ENCODE measurements at regions of chr1 and their contacts with region 1.

Region 1: GRCh38 chr1:212994926-212995325 is 20.7 kb downstream of the ANGEL2 start:
- DNase-seq: no peak
- ATAC-seq: no peak
- H3K4me3 Mint-ChIP-seq: no peak overlapping the region
- H3K27ac Mint-ChIP-seq: no peak overlapping the region
- H3K4me1 Mint-ChIP-seq: no peaks in the 10 kb centered on the region
- H3K27me3 Mint-ChIP-seq: no peaks in the 10 kb centered on the region
- CTCF ChIP-seq: no peak

Region 2: GRCh38 chr1:212070720-212071302 is 924.1 kb before region 1 on chr1:
- CTCF ChIA-PET with region 1: no interaction called
- POLR2A ChIA-PET with region 1: no interaction called
- intact Hi-C with region 1: loop called (anchors 5 kb)
- DNase-seq: no peak
- ATAC-seq: peak; percentile 47
- H3K4me3 Mint-ChIP-seq: no peak overlapping the region
- H3K27ac Mint-ChIP-seq: no peak overlapping the region
- H3K4me1 Mint-ChIP-seq: no peaks in the 10 kb centered on the region
- H3K27me3 Mint-ChIP-seq: no peaks in the 10 kb centered on the region
- CTCF ChIP-seq: no peak

Region 3: DNA sequence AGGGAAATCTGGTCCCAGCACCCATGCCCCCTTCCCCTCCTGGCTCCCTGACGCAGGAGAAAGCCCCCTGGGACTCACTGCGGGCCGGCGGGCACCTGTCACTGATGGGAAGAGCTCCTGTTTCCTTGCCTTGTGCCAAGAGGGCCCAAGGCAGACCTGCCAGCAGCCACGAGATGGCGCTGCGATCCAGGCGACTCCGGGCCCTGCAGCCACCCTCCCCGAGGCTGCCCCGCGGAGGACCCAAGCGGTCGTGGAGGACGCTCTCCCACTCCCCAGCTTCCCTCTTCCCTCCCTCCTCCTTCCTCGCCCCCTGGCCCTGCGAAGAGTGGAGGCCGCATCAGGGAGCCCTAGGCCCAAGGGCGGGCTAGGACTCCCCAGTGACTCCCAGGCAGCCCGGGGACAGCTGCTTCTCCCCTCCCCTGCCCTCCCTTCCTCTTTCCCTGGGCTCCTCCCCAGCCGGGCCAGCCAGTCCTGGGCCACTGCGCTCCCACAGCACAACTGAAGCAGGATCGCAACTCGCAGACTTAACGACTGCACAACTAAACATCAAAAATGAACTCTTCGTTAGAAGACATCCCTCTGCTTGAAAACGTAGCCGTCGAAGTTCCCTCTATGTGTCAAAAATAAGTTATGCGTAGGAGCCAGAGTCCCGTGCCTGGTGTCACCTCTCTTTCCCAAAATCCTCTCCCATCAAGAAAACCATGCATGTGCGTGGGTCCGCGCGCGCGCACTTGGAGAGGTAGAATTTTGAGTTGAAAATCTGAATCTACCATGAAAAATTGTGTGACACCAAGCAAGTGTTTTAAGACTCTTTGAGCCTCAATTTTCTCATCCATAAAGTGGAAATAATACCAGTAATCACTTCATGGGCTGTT is 329.4 kb before region 1 on chr1:
- CTCF ChIA-PET with region 1: interaction called, 40 read pairs
- POLR2A ChIA-PET with region 1: interaction called, 4 read pairs
- intact Hi-C with region 1: loop called (anchors 1 kb)
- DNase-seq: peak; percentile 80
- ATAC-seq: peak; percentile 94
- H3K4me3 Mint-ChIP-seq: peak overlapping the region; percentile 82
- H3K27ac Mint-ChIP-seq: peak overlapping the region; percentile 53
- H3K4me1 Mint-ChIP-seq: peaks cover 17% of the 10 kb centered on the region
- H3K27me3 Mint-ChIP-seq: no peaks in the 10 kb centered on the region
- CTCF ChIP-seq: peak; percentile 61

Region 4: DNA sequence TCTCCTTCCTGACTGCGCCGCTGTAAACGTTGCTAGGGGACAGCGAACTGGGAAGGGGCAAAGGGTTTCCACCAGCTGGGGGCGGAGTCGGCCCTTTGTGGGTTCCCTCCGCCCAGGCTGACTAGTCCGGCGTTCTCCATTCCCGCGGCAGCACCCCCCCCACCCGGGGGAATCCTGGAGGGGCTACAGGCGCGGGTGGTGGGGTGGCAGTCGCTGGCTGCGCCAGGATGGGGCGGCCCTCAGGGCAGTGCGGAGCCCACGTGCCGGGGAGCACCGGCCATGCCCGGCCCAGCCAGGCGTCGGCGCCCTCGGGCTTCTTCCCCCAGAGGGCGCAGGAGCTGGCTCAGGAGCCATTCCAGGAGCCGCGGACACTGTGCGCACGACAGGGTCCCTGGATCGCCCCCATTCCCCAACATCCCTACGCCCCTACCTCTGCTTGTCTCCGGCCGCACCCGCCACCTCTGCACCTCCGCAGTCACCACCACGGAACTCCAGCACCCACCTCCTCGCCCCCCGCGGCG is 295.8 kb before region 1 on chr1:
- CTCF ChIA-PET with region 1: interaction called, 4 read pairs
- POLR2A ChIA-PET with region 1: no interaction called
- intact Hi-C with region 1: loop called (anchors 1 kb)
- DNase-seq: peak; percentile 56
- ATAC-seq: peak; percentile 55
- H3K4me3 Mint-ChIP-seq: peak overlapping the region; percentile 88
- H3K27ac Mint-ChIP-seq: peak overlapping the region; percentile 79
- H3K4me1 Mint-ChIP-seq: peaks cover 45% of the 10 kb centered on the region
- H3K27me3 Mint-ChIP-seq: peaks cover 11% of the 10 kb centered on the region
- CTCF ChIP-seq: no peak

Region 5: DNA sequence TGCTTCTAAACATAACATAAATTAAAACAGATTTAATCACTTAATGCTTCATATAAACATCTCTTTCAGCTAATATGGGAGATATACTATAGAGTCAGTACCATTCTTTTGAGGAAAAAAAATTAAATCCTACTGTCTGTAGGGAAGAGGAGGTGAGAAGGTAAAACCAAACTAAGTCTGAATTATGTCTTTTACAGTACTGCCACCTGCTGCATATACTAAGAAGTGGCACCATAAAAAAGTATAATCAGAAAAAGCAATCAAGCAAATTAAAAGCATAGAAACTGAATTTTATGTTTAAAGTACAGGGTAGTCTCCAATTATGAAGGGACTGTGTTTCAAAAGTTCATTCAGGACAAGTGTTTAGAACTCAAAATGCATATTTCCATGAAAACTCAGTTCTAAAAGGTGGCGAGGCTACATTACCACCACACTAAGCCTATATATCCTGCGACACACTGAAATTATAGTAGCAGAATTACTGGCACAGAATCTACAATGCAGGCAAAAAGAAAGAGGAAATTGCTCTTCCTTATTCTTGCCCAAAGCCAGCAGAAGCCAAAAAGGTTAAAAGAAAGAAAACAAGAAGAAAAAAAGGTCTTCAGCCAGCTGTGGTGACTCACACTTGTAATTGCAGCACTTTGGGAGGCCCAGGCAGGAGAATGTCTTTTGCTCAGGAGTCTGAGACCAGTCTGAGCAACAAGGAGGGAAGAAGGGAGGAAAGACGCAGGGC is 212.3 kb before region 1 on chr1:
- CTCF ChIA-PET with region 1: interaction called, 6 read pairs
- POLR2A ChIA-PET with region 1: no interaction called
- intact Hi-C with region 1: loop called (anchors 1 kb)
- DNase-seq: no peak
- ATAC-seq: peak; percentile 66
- H3K4me3 Mint-ChIP-seq: no peak overlapping the region
- H3K27ac Mint-ChIP-seq: no peak overlapping the region
- H3K4me1 Mint-ChIP-seq: peaks cover 2% of the 10 kb centered on the region
- H3K27me3 Mint-ChIP-seq: no peaks in the 10 kb centered on the region
- CTCF ChIP-seq: peak; percentile 80

Region 6: GRCh38 chr1:212814537-212815334 is 180.2 kb before region 1 on chr1:
- CTCF ChIA-PET with region 1: interaction called, 31 read pairs
- POLR2A ChIA-PET with region 1: no interaction called
- intact Hi-C with region 1: loop called (anchors 1 kb)
- DNase-seq: no peak
- ATAC-seq: no peak
- H3K4me3 Mint-ChIP-seq: no peak overlapping the region
- H3K27ac Mint-ChIP-seq: no peak overlapping the region
- H3K4me1 Mint-ChIP-seq: peaks cover 6% of the 10 kb centered on the region
- H3K27me3 Mint-ChIP-seq: no peaks in the 10 kb centered on the region
- CTCF ChIP-seq: no peak

Region 7: DNA sequence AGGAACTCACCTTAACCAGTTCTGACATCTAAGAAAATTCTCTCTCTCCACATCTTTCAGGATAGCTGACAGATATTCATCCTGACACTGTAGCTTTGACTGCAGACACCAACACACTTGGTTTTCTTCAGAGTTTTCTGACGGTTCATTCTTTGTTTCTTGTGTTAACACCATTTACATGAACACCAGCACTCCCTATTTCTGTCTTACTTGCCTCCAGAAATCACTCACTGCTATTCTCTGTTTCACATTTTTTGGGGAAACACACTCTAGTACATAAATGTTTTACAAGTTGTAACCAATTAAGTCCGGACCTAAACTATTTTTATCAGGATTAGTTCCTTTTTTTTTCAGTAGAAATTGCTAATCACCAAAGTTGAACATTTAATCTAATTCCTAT is 121.4 kb before region 1 on chr1:
- CTCF ChIA-PET with region 1: no interaction called
- POLR2A ChIA-PET with region 1: no interaction called
- intact Hi-C with region 1: no loop called
- DNase-seq: no peak
- ATAC-seq: no peak
- H3K4me3 Mint-ChIP-seq: no peak overlapping the region
- H3K27ac Mint-ChIP-seq: no peak overlapping the region
- H3K4me1 Mint-ChIP-seq: peaks cover 4% of the 10 kb centered on the region
- H3K27me3 Mint-ChIP-seq: no peaks in the 10 kb centered on the region
- CTCF ChIP-seq: no peak

Region 8: DNA sequence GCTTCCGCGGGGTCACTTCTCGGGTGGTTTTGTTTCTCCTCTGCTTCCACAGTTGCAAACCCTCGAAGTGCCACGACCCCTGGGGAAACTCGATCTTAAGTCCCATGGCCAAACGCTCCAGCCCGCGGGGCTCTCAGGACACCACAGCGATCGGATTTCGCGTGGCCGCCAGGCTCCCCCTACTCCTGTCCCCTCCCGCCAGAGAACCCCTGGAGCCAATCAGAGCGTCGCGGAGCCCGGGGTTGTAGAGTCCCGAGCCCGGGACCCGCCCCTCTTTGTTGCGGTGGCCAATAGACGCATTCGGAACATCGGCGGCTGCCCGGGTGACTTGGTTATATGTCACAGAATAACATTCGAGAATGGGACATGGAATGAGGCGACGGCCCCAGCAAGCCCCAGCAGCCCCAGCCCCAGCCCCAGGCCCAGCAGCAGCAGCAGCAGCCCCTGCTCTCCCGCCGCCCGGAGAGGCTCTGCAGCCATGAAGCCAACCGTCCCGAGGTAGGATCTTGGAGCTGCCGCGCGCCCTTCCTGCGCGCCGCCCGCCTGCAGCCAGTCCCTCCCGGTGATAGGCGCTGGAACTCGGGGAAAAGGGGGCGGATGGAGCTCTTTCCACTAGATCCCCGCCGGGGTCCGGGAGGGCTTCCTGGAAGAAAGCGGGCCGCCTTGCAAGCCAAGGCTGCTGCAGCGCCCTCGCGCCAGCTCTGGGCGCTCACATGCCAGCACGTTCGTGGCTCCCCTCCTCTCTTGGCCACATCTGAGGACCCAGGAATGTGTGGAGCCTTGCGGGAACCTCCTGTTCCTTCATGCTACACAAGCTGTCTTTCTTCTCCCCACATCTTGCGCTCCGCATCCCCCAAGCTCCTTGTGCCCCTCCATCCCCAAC is 44.4 kb before region 1 on chr1 and contains the start of gene VASH2:
- CTCF ChIA-PET with region 1: interaction called, 3 read pairs
- POLR2A ChIA-PET with region 1: no interaction called
- intact Hi-C with region 1: loop called (anchors 5 kb)
- DNase-seq: peak; percentile 53
- ATAC-seq: peak; percentile 99
- H3K4me3 Mint-ChIP-seq: peak within 1 kb of the TSS; percentile 88
- H3K27ac Mint-ChIP-seq: no peak within 1 kb of the TSS
- H3K4me1 Mint-ChIP-seq: peaks cover 27% of the 10 kb centered on the region
- H3K27me3 Mint-ChIP-seq: peaks cover 21% of the 10 kb centered on the region
- CTCF ChIP-seq: no peak
- total RNA-seq, gene VASH2: 0.07 and 0.17 TPM in 2 replicates

Region 9: DNA sequence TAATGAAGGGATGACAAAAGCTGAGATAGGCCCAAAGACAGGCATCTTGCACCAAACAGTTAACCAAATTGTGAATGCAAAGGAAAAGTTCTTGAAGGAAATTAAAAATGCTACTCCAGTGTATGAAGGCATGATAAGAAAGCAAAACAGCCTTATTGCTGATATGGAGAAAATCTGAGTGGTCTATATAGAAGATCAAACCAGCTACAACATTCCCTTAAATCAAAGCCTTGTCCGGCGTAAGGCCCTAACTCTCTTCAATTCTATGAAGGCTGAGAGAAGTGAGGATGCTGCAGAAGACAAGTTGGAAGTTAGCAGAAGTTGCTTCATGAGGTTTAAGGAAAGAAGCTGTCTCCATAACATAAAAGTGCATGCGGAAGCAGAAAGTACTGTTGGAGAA is 25.1 kb after region 1 on chr1:
- CTCF ChIA-PET with region 1: no interaction called
- POLR2A ChIA-PET with region 1: no interaction called
- intact Hi-C with region 1: no loop called
- DNase-seq: no peak
- ATAC-seq: no peak
- H3K4me3 Mint-ChIP-seq: no peak overlapping the region
- H3K27ac Mint-ChIP-seq: no peak overlapping the region
- H3K4me1 Mint-ChIP-seq: peaks cover 4% of the 10 kb centered on the region
- H3K27me3 Mint-ChIP-seq: peaks cover 14% of the 10 kb centered on the region
- CTCF ChIP-seq: no peak

Region 10: DNA sequence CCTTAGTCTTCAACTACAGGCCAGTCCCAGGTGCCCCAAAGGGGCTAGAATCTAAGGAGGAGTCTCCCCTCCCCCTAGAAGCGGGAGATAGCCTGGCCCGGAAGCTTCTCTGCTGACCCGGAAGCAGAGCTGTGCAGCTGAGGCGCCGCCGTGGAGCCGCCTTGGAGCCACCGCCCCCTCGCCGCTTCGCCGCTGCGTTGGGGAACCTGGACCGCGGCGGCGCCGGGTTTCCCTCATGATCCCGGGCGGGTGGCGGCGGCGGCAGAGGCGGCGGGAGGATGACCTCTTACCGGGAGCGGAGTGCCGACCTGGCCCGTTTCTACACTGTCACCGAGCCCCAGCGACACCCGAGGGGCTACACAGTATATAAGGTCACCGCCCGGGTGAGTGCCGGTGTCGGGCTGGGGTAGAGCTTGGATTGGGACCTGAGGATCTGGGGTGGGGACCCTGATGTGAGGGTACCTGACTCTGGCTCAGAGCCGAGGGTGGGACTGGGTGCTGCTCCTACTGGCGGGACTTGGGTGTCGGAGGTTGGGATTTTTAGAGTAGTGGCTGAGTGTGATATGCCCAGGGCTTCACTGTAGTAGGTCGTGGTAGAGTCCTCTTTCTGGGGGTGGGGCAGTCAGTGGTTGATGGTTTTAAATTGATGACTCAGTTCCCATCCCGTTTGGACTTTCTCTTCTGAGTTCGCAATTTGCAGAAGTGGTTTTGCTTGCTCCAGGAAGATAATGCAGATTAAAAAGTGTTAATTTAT is 56.4 kb after region 1 on chr1 and contains the start of gene RPS6KC1:
- CTCF ChIA-PET with region 1: no interaction called
- POLR2A ChIA-PET with region 1: no interaction called
- intact Hi-C with region 1: no loop called
- DNase-seq: peak; percentile 73
- ATAC-seq: peak; percentile 93
- H3K4me3 Mint-ChIP-seq: peak within 1 kb of the TSS; percentile 97
- H3K27ac Mint-ChIP-seq: peak within 1 kb of the TSS; percentile 92
- H3K4me1 Mint-ChIP-seq: peaks cover 25% of the 10 kb centered on the region
- H3K27me3 Mint-ChIP-seq: peaks cover 20% of the 10 kb centered on the region
- CTCF ChIP-seq: no peak
- total RNA-seq, gene RPS6KC1: 12.9 and 13.0 TPM in 2 replicates

Region 11: DNA sequence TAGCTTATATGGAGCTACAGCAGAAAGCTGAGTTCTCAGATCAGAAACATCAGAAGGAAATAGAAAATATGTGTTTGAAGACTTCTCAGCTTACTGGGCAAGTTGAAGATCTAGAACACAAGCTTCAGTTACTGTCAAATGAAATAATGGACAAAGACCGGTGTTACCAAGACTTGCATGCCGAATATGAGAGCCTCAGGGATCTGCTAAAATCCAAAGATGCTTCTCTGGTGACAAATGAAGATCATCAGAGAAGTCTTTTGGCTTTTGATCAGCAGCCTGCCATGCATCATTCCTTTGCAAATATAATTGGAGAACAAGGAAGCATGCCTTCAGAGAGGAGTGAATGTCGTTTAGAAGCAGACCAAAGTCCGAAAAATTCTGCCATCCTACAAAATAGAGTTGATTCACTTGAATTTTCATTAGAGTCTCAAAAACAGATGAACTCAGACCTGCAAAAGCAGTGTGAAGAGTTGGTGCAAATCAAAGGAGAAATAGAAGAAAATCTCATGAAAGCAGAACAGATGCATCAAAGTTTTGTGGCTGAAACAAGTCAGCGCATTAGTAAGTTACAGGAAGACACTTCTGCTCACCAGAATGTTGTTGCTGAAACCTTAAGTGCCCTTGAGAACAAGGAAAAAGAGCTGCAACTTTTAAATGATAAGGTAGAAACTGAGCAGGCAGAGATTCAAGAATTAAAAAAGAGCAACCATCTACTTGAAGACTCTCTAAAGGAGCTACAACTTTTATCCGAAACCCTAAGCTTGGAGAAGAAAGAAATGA is 1645.7 kb after region 1 on chr1:
- CTCF ChIA-PET with region 1: no interaction called
- POLR2A ChIA-PET with region 1: no interaction called
- intact Hi-C with region 1: no loop called
- DNase-seq: no peak
- ATAC-seq: no peak
- H3K4me3 Mint-ChIP-seq: no peak overlapping the region
- H3K27ac Mint-ChIP-seq: no peak overlapping the region
- H3K4me1 Mint-ChIP-seq: no peaks in the 10 kb centered on the region
- H3K27me3 Mint-ChIP-seq: no peaks in the 10 kb centered on the region
- CTCF ChIP-seq: no peak

Measured in activated B cell treated with CpG ODN at 0.5 μM for 24 hours (primary cell).